ENCODE measurements at regions of chr2 and their contacts with region 1.

Region 1: DNA sequence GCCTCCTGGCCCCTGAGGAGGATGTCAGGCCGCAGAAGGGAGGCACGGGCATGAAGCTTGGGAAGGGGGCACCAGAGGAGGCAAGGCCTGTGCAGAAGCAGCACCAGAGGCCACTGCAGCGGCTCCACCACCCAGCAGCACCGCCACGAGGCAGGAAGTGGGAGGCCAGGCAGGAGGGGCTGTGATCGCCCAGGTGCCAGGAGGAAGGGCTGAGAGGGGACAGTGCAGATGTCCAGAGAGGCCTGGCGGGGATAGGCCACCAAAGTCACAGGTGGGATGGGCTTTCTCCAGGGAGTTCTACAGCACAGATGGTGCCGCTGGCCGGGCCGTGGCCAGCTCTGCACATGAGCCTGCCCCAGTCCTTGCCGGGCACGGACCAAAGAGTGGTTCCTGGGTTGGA is 6.0 kb upstream of the ALPI start:
- DNase-seq: no peak
- ATAC-seq: no peak

Region 2: GRCh38 chr2:232377801-232378734 is 71.9 kb before region 1 on chr2:
- intact Hi-C with region 1: no loop called
- DNase-seq: no peak
- ATAC-seq: no peak

Region 3: GRCh38 chr2:232502911-232503808 is 53.2 kb after region 1 on chr2:
- intact Hi-C with region 1: no loop called
- DNase-seq: no peak
- ATAC-seq: peak; percentile 85

Region 4: DNA sequence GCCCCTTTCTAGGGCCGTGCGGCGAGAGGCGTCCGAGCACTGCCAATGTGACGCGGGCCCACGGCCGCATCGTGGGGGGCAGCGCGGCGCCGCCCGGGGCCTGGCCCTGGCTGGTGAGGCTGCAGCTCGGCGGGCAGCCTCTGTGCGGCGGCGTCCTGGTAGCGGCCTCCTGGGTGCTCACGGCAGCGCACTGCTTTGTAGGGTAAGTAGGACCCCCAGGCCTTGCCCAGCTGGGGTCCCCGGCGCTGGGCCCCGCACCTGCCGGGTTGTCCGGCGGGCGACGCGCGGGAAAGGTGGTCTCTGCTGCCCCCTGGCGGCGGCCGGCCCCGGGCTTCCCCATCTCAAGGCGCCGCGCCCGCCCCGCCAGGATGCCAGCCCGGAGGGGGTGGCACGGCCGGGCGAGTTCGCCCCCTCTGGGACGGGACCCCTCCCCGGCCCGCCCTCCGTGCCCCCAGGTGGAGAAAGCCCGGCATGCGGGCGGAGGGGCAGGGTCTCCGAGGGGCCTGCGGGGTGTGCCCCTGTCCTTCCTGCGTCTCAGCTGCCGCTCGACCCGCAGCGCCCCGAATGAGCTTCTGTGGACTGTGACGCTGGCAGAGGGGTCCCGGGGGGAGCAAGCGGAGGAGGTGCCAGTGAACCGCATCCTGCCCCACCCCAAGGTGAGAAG is 72.1 kb after region 1 on chr2:
- intact Hi-C with region 1: loop called (anchors 5 kb)
- DNase-seq: peak; percentile 80
- ATAC-seq: peak; percentile 65

Region 5: DNA sequence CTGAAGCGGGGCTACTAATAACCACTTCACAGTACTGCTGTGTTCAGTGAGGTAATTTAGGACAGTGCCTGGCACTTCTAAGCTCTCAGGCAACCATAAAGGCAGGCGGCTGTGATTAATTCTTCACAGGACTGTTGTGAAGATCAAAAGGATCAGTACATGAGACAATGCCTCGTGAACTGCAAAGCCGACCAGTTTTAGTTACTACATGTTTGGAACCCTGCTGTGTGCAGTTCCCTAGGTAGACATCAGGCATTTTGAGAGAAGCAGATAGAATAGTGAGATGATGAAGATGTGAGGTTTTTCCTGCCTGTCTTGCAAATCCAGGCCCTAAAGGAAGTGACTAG is 202.5 kb after region 1 on chr2:
- intact Hi-C with region 1: no loop called
- DNase-seq: no peak
- ATAC-seq: no peak

Region 6: DNA sequence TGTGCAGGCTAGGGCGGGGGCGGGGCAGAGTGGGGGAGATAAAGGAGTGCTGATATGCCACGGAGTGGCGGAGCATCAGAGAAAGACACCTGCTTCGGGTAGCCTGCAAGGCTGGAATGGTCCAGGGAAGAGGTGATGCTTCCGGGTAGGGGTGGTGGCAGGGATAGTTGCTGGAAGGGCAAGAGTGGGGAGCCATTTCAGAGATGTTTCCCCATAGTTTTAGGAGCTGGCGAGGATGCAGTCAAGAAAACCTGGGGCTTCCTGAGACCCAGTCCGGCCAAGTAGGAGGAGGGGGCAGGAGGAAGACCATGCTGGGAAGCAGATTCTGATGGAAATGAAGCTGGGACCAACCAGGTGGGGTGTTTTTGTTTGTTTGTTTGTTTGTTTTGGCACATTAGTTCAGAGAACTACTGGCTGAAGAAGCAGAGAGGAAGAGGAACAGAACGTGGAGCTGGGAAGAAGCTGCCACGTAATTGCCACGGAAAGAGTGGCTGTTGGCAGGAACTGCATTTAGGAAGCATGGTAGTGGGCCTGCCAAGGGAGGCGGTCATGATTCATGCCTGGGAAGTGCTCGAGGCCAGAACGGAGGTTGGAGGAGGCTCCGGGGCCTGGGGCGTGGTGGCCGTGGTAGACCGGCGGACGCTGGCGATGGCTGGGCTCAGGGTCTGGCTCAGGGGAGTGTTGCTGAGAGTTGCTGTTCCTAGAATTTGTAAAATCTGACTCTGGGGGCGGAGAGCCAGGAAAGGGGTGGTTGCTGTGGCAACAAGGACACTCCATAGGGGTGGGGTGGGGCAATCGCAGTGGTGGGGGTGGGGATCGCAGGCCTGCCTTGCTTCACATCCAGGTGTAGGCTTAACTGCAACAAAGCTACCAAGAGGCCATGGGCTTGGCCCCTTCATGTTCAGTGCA is 601.5 kb after region 1 on chr2:
- intact Hi-C with region 1: no loop called
- DNase-seq: peak; percentile 85
- ATAC-seq: peak; percentile 76